Activated CD8-positive, alpha-beta memory T cell treated with anti-CD3 and anti-CD28 coated beads, Interleukin-2, amount 10 ng/mL, durations not matched to agents 7 days and 5 days (primary cell): ENCODE measurements at regions of chr9 and their contacts with region 1.

Region 1: DNA sequence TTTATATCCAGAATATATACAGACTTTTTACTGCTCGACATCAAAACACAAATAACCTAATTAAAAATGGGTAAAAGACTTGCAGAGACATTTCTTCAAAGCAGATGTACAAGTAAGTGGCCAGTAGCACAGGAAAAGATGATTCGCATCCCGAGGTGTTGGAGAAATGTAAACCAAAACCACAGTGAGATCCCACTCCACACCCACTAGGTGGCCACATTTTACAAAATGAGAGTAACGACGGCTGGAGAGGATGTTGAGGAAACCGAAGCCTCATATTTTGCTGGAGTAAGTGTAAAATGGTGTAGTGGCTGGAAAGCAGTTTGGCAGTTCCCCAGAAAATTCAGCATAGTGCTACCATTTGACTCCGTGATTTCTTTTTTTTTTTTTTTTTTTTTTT is 21.2 kb upstream of the GBGT1 start:
- DNase-seq: peak; percentile 75
- ATAC-seq: peak; percentile 50
- H3K4me3 Mint-ChIP-seq: no peak overlapping the region
- H3K27ac Mint-ChIP-seq: no peak overlapping the region
- H3K4me1 Mint-ChIP-seq: peaks cover 21% of the 10 kb centered on the region
- H3K27me3 Mint-ChIP-seq: peaks cover 65% of the 10 kb centered on the region

Region 2: GRCh38 chr9:133199648-133200321 is 14.8 kb after region 1 on chr9:
- CTCF ChIA-PET with region 1: interaction called, 23 read pairs
- DNase-seq: peak; percentile 49
- ATAC-seq: peak; percentile 68
- H3K4me3 Mint-ChIP-seq: peak overlapping the region; percentile 60
- H3K27ac Mint-ChIP-seq: no peak overlapping the region
- H3K4me1 Mint-ChIP-seq: peaks cover 6% of the 10 kb centered on the region
- H3K27me3 Mint-ChIP-seq: peaks cover 20% of the 10 kb centered on the region

Region 3: DNA sequence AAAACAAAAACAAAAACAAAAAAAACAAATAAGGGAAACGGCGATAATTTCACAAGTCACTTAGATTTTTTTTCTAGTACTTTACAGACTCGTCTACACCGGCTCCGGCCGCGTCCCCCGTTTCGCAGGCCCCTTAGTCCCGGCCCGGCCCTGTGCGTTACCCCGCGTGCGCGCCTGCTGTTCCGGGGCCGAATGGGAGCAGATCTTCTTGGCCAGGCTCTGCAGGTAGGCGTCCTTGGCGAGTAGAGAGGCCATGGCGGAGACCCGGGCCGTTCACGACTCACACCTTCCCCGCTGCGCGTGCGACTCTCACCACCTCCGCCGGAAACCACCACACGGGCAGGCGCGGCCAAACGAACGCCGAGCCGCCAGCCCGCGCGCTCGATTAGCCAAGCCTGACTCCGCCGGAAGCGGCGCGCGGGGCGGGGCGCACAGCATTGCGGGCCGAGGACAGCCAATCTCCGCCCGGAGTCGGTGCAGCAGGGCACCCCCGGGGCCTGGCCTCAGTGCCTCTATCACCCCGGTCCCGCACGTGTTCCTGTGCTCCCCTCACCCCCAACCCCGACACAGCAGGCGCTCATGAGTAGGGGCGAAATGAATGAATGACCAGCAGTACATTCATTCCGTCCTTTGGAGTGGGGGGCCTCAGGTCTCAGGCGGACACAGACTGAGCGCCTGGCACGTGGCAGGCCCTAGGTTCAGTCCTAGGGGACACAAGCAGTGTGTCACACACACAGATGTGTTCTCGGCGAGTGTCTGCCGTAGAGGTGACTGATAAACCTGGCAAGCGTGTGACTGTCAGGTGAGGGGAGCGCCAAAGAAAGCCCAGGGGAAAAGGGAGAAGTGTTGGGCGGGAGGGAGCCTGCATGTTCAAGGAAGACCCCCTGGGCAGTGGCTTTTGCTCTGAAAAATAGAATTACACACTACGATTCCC is 151.2 kb after region 1 on chr9 and contains the start of gene SURF6:
- CTCF ChIA-PET with region 1: interaction called, 11 read pairs
- DNase-seq: peak; percentile 94
- ATAC-seq: peak; percentile 96
- H3K4me3 Mint-ChIP-seq: peak within 1 kb of the TSS; percentile 95
- H3K27ac Mint-ChIP-seq: peak within 1 kb of the TSS; percentile 96
- H3K4me1 Mint-ChIP-seq: peaks cover 55% of the 10 kb centered on the region
- H3K27me3 Mint-ChIP-seq: no peaks in the 10 kb centered on the region
- total RNA-seq, gene SURF6: 12.9 to 16.5 TPM

Region 4: DNA sequence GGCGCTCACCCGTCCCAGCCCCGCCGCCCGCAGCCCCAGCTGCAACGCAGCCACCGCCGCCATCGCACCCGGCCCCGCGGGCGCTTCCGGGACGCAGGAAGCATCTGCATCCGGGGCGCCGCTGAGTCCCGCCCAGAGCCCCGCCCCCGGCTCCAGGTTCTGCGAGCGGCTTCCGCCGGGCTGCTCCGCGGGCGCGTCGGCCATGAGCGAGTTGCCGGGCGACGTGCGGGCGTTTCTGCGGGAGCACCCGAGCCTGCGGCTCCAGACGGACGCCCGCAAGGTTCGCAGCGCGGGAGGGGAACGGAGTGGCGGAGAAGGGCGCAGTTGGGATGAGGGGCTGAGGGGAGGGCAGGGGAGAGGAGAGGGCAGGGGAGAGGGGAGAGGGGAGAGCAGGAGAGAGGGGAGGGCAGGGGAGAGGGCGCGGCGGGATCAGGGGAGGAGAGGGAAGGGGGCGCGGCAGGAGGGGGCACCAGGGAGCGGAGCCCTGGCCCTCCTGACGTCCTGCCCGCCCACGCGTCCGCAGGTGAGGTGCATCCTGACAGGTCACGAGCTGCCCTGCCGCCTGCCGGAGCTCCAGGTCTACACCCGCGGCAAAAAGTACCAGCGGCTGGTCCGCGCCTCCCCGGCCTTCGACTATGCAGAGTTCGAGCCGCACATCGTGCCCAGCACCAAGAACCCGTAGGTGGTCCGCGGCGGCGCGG is 171.6 kb after region 1 on chr9 and contains the starts of genes SURF1 and SURF2:
- CTCF ChIA-PET with region 1: interaction called, 10 read pairs
- DNase-seq: peak; percentile 94
- ATAC-seq: peak; percentile 92
- H3K4me3 Mint-ChIP-seq: peak within 1 kb of the TSS; percentile 90
- H3K27ac Mint-ChIP-seq: peak within 1 kb of the TSS; percentile 88
- H3K4me1 Mint-ChIP-seq: peaks cover 59% of the 10 kb centered on the region
- H3K27me3 Mint-ChIP-seq: no peaks in the 10 kb centered on the region
- total RNA-seq, gene SURF1: 35.4 to 35.6 TPM
- total RNA-seq, gene SURF2: 14.9 to 23.2 TPM

Region 5: GRCh38 chr9:133406480-133407307 is 221.7 kb after region 1 on chr9:
- CTCF ChIA-PET with region 1: interaction called, 17 read pairs
- DNase-seq: peak; percentile 89
- ATAC-seq: peak; percentile 92
- H3K4me3 Mint-ChIP-seq: no peak overlapping the region
- H3K27ac Mint-ChIP-seq: peak overlapping the region; percentile 67
- H3K4me1 Mint-ChIP-seq: peaks cover 17% of the 10 kb centered on the region
- H3K27me3 Mint-ChIP-seq: no peaks in the 10 kb centered on the region

Region 6: GRCh38 chr9:133485361-133486260 is 300.6 kb after region 1 on chr9:
- CTCF ChIA-PET with region 1: interaction called, 52 read pairs
- DNase-seq: no peak
- ATAC-seq: peak; percentile 57
- H3K4me3 Mint-ChIP-seq: no peak overlapping the region
- H3K27ac Mint-ChIP-seq: no peak overlapping the region
- H3K4me1 Mint-ChIP-seq: peaks cover 6% of the 10 kb centered on the region
- H3K27me3 Mint-ChIP-seq: peaks cover 5% of the 10 kb centered on the region